T-cell (primary cell): ENCODE measurements at regions of chr9 and their contacts with region 1.

Region 1: GRCh38 chr9:122307925-122308324 is 43.2 kb downstream of the MRRF start:
- DNase-seq: no peak
- ATAC-seq: no peak
- H3K4me3 ChIP-seq: no peak overlapping the region
- H3K4me3 Mint-ChIP-seq: no peak overlapping the region
- H3K27ac ChIP-seq: no peak overlapping the region
- H3K27ac Mint-ChIP-seq: no peak overlapping the region
- H3K4me1 ChIP-seq: no peaks in the 10 kb centered on the region
- H3K4me1 Mint-ChIP-seq: no peaks in the 10 kb centered on the region
- H3K27me3 ChIP-seq: no peaks in the 10 kb centered on the region
- H3K27me3 Mint-ChIP-seq: no peaks in the 10 kb centered on the region

Region 2: DNA sequence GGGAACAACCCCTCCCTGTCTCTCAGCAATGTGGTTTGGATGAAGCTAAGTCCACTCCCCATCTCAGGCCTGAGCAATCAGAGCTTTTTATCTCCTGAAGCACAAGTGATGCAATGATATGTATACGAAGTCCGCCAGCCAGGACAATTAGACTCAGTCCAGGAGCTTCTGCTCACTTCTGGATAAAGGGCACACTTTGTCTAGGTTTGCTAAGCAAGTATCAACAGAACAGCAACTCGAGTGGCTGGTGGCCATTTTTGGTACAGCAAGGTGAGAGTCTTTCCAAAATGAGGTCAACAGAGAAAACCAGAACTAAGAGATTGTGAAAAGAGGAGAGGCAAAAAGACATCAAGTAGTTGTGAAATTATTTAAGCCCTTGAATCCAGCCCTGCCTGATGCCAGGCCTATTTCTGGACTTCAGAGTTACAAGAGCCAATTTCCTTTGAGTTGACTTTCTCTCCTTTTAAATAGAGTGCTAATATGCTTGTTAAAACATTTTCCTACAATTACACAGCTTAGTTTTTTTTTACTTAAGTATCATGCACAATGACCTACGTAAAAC is 156.6 kb before region 1 on chr9:
- CTCF ChIA-PET with region 1: no interaction called
- POLR2A ChIA-PET with region 1: no interaction called
- DNase-seq: no peak
- ATAC-seq: no peak
- H3K4me3 ChIP-seq: no peak overlapping the region
- H3K4me3 Mint-ChIP-seq: no peak overlapping the region
- H3K27ac ChIP-seq: no peak overlapping the region
- H3K27ac Mint-ChIP-seq: no peak overlapping the region
- H3K4me1 ChIP-seq: peaks cover 0 to 2% of the 10 kb centered on the region in 2 experiments
- H3K4me1 Mint-ChIP-seq: peaks cover 22 to 28% (median 23%) of the 10 kb centered on the region in 3 donors
- H3K27me3 ChIP-seq: no peaks in the 10 kb centered on the region
- H3K27me3 Mint-ChIP-seq: no peaks in the 10 kb centered on the region

Region 3: DNA sequence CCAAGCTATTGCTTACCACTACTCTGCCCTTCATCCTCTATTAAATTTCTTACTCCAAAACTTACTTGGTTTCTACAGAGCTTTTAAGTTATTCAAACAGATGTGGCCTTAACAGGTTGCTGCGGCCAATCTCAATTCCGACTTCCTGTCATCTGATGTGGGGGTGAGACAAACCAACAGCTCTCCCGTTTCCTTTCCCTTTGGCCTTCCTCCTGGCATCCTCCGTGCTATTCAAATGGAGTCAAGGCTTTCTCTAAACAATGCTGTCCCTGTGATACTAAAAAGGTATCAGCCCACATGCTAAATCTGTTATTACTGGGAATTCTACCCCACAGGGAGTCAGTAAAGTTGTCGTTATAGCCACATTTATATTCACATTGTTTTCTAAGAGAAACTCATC is 55.1 kb before region 1 on chr9:
- CTCF ChIA-PET with region 1: no interaction called
- POLR2A ChIA-PET with region 1: interaction called in 1 of 2 experiments, 10 read pairs
- DNase-seq: no peak
- ATAC-seq: no peak
- H3K4me3 ChIP-seq: no peak overlapping the region
- H3K4me3 Mint-ChIP-seq: peak overlapping the region in 1 of 3 donors; percentile 0
- H3K27ac ChIP-seq: no peak overlapping the region
- H3K27ac Mint-ChIP-seq: no peak overlapping the region
- H3K4me1 ChIP-seq: no peaks in the 10 kb centered on the region
- H3K4me1 Mint-ChIP-seq: peaks cover 5 to 23% (median 22%) of the 10 kb centered on the region in 3 donors
- H3K27me3 ChIP-seq: no peaks in the 10 kb centered on the region
- H3K27me3 Mint-ChIP-seq: no peaks in the 10 kb centered on the region